A673 (cell line): ENCODE measurements at regions of chr2 and their contacts with region 1.

Region 1: GRCh38 chr2:21317131-21317530 is 193.4 kb downstream of the TDRD15 start:
- DNase-seq: peak; percentile 51
- H3K4me3 ChIP-seq: no peak overlapping the region
- H3K27ac ChIP-seq: no peak overlapping the region
- H3K4me1 ChIP-seq: no peaks in the 10 kb centered on the region
- H3K27me3 ChIP-seq: no peaks in the 10 kb centered on the region
- CTCF ChIP-seq: peak; percentile 75

Region 2: DNA sequence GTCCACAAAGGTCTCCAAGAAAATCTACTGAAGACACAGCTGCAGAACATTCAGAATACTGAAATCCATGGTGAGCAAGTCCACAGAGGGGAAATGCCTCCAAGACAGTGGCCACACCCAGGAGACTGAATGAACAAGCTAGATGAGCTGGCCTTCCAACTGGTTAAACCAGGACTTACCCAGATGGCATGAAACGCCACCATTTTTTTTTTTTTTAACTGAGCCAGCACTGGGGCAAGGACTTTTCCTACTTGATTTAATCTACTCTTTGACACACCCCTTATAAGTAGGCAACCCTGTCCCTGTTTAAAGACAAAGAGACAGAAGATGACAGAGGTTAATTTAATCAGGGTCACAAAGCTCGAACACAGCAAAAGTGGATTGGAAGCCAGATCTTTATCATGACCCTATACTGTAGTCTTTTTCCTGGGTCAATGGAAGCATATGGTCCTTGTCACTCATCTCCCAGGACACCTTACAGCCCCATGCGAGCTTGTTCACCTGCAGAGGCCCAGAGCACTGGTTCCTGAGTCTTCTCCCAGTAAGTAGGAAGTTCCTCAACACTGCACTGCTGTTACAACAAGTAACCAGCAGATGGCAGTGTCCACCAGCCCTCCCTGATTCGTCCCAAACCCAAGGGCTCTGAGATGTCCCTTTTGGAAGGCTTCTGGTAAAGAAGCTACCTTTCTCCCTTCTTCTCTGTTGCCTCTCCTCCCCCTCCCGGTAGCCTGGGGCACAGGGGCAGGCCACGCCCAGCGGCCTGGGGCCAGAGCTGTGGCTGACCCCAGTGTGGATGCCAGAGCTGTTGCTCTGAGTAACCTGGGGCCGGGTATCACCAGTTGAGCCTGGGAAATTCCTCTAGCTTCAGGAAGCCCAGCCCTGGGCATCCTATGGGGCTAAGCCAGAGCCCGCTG is 655.8 kb before region 1 on chr2:
- CTCF ChIA-PET with region 1: no interaction called
- POLR2A ChIA-PET with region 1: no interaction called
- intact Hi-C with region 1: loop called (anchors 5 kb)
- DNase-seq: peak; percentile 83
- H3K4me3 ChIP-seq: no peak overlapping the region
- H3K27ac ChIP-seq: no peak overlapping the region
- H3K4me1 ChIP-seq: peaks cover 1% of the 10 kb centered on the region
- H3K27me3 ChIP-seq: peaks cover 96% of the 10 kb centered on the region
- CTCF ChIP-seq: peak; percentile 94

Region 3: DNA sequence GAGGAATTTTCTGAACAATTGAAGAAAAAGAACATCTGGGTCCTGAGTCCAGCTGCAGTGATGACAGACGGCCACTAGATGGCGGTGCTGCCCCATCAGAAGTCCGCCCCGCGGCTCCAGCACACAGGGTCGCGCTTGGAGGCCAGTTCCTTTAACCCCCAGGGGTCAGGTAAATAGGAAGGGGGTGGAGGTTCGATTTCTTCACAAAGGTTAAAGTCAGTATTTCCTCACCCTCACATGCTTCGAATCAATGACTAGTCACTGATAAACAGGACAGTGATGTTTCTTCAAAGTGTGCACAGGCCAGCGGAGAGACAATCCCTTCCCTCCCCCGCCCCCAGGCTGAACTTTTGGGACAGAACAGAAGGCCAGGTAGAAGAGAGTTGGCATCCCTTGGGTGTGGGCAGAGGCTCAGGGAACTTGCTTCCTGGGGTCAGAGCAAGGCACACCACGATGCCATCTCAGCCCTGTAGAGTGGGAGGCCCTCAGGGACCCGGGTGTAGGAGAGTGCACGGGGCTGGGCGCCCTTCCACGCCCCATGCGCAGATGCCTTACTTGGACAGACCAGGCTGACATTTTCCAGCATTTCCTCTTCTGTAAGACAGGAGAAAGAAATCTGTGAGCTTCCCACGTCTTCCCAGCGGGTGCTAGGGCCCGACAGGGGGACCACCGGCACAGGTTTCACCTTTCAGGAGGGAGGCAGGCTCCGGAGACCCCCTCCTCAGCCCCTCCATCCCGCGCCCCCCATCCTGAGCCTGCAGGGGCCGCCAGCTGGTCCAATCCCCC is 274.0 kb before region 1 on chr2:
- CTCF ChIA-PET with region 1: interaction called, 6 read pairs
- POLR2A ChIA-PET with region 1: no interaction called
- intact Hi-C with region 1: loop called (anchors 2 kb)
- DNase-seq: peak; percentile 44
- H3K4me3 ChIP-seq: no peak overlapping the region
- H3K27ac ChIP-seq: no peak overlapping the region
- H3K4me1 ChIP-seq: no peaks in the 10 kb centered on the region
- H3K27me3 ChIP-seq: peaks cover 88% of the 10 kb centered on the region
- CTCF ChIP-seq: peak; percentile 97

Region 4: GRCh38 chr2:21118302-21118920 is 198.7 kb before region 1 on chr2:
- CTCF ChIA-PET with region 1: interaction called, 13 read pairs
- POLR2A ChIA-PET with region 1: no interaction called
- intact Hi-C with region 1: no loop called
- DNase-seq: peak; percentile 37
- H3K4me3 ChIP-seq: no peak overlapping the region
- H3K27ac ChIP-seq: no peak overlapping the region
- H3K4me1 ChIP-seq: no peaks in the 10 kb centered on the region
- H3K27me3 ChIP-seq: peaks cover 28% of the 10 kb centered on the region
- CTCF ChIP-seq: peak; percentile 64

Region 5: GRCh38 chr2:21175895-21176646 is 141.1 kb before region 1 on chr2:
- CTCF ChIA-PET with region 1: interaction called, 3 read pairs
- POLR2A ChIA-PET with region 1: no interaction called
- intact Hi-C with region 1: loop called (anchors 2 kb)
- DNase-seq: peak; percentile 3
- H3K4me3 ChIP-seq: no peak overlapping the region
- H3K27ac ChIP-seq: no peak overlapping the region
- H3K4me1 ChIP-seq: no peaks in the 10 kb centered on the region
- H3K27me3 ChIP-seq: peaks cover 38% of the 10 kb centered on the region
- CTCF ChIP-seq: peak; percentile 28; the same call in 1 of the 2 replicates

Region 6: DNA sequence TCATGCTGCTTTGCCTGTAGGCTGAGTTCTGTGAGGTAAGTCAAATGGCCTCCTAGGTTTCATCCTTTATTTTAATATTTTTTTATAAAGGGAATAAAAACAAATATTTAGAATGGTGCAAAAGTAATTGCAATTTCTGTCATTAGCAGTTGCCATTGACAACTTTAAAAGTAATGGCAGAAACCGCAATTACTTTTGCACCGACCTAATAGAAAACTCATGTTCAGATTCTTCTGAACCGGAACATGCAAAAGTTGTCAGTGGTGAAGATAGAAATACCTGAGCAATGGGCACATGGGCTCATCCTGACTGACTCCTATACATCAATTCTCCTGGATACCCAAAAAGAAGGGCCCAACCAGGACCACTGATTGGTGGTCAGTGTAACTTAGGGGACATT is 1460.4 kb after region 1 on chr2:
- CTCF ChIA-PET with region 1: no interaction called
- POLR2A ChIA-PET with region 1: no interaction called
- intact Hi-C with region 1: no loop called
- DNase-seq: no peak
- H3K4me3 ChIP-seq: no peak overlapping the region
- H3K27ac ChIP-seq: no peak overlapping the region
- H3K4me1 ChIP-seq: no peaks in the 10 kb centered on the region
- H3K27me3 ChIP-seq: no peaks in the 10 kb centered on the region
- CTCF ChIP-seq: no peak